Activated T-helper 1 cell treated with anti-CD3 and anti-CD28 coated beads, Interleukin-12 subunit alpha, Interleukin-12 subunit beta, Interleukin-2, Interleukin-4 antibody, amounts not matched to agents 30 ng/mL and 10 ng/mL and 1 ng/mL, durations not matched to agents 14 hours and 24 hours and 36 hours (primary cell): ENCODE measurements at regions of chr1 and their contacts with region 1.

Region 1: DNA sequence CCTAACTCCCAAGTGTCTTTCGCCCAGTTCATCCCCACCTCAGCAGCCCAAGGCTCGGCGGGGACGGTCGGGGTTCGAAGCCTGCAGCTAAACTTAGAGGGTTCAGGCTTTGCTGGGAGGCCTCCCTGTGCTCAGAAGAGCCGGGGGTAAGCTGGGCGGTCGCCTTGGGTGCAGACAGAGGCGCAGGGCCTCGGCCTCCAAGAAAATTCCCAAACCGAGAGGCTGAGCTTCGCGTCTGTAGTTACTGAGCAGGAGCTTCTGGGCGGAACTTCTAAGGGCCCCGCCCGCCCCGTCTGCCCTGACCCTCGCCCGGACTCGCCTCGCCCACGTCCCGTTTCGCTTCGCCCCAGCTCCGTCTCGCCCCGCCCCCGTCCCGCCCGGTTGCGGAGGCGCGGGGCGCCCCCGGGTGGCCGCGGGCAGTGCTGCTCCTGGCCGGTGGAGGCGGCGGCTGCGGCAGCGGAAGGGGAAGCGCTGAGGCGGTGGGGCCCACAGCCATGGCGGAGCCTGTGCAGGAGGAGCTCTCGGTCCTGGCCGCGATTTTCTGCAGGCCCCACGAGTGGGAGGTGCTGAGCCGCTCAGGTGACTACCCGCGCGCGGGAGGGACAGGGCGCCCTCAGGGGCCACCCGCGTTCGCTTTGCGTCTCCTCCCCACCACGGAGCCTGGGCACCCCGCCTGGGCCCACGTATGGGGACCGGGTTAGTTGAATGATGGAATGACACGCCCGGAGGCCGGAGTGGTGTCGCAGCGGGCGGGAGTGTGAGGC is at the start of gene RWDD3:
- DNase-seq: peak; percentile 92
- H3K4me3 Mint-ChIP-seq: peak within 1 kb of the TSS; percentile 94
- H3K27ac Mint-ChIP-seq: peak within 1 kb of the TSS; percentile 93
- H3K4me1 Mint-ChIP-seq: peaks cover 29% of the 10 kb centered on the region
- H3K27me3 Mint-ChIP-seq: peaks cover 19% of the 10 kb centered on the region
- total RNA-seq, gene RWDD3: 10.6 and 10.8 TPM in 2 replicates

Region 2: DNA sequence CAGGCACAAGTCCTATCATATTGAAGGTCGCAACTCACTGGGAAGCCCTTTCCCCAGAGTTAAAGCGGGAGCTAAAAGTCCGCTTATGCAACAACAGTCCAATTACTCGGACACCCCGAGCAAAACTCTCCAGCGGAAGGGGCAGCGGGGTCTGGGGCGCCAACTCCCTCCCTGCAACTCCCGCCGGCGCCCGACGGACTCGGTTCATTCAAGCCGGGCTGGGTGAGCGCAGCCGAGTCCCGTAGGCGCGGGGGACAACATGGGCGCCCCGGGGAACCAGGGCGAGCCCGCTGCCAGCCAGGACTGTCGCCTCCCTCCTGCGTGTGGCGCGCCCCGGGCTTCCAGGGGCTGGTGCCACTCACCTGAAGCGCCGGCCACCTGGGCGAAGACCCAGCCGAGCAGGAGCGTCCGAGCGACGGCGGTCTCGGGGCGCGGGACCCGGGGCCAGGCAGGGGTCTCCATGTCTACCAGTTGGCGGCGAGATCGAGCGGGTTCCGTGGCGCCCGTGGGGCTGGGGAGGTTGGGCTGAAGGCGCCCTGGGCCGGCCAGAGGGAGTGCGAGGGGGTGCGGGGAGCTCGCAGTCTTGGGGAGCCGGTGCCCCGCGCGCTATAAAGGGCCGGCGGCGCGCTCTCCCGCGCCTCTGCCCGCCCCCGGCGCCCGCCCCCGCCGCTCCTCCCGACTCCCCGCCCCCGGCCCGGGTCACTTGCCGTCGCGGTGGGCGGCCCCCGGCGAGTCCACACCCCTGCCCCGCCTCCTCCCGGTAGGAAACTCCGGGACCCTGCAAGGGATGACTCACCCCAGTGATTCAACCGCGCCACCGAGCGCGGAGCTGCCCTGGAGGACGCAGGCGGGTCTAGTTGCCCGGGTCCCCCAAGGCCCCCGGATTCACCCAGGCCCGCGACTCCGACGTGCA is 692.5 kb before region 1 on chr1 and contains the start of gene F3:
- intact Hi-C with region 1: loop called (anchors 10 kb)
- DNase-seq: peak; percentile 68
- H3K4me3 Mint-ChIP-seq: peak within 1 kb of the TSS; percentile 86
- H3K27ac Mint-ChIP-seq: peak within 1 kb of the TSS; percentile 33
- H3K4me1 Mint-ChIP-seq: peaks cover 20% of the 10 kb centered on the region
- H3K27me3 Mint-ChIP-seq: peaks cover 79% of the 10 kb centered on the region
- total RNA-seq, gene F3: 0.16 and 0.32 TPM in 2 replicates

Region 3: GRCh38 chr1:94854458-94855306 is 379.2 kb before region 1 on chr1:
- intact Hi-C with region 1: loop called (anchors 1 kb)
- DNase-seq: peak; percentile 73
- H3K4me3 Mint-ChIP-seq: no peak overlapping the region
- H3K27ac Mint-ChIP-seq: no peak overlapping the region
- H3K4me1 Mint-ChIP-seq: no peaks in the 10 kb centered on the region
- H3K27me3 Mint-ChIP-seq: peaks cover 2% of the 10 kb centered on the region

Region 4: DNA sequence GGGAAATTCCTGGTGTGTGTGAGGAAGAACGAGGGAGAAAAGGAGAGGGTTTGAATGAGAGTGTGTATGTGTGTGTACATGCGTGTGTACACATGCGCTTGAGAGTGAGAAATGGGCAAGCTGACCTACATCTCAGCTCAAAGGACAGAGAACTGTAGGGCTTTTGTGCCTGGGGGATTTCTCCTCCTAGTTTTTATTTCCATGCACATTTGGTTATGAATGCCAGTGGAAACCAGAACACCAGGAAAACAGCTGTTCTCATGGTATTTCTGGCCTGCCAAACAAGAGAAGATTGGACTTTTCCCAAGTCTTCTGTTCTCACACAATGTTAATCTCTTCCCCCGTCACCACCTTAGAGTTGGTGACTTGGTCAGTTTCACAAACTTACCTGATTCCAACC is 368.6 kb before region 1 on chr1:
- intact Hi-C with region 1: loop called (anchors 5 kb)
- DNase-seq: no peak
- H3K4me3 Mint-ChIP-seq: no peak overlapping the region
- H3K27ac Mint-ChIP-seq: no peak overlapping the region
- H3K4me1 Mint-ChIP-seq: no peaks in the 10 kb centered on the region
- H3K27me3 Mint-ChIP-seq: peaks cover 13% of the 10 kb centered on the region

Region 5: GRCh38 chr1:95116580-95117206 is 117.2 kb before region 1 on chr1:
- intact Hi-C with region 1: loop called (anchors 5 kb)
- DNase-seq: no peak
- H3K4me3 Mint-ChIP-seq: peak overlapping the region; percentile 84
- H3K27ac Mint-ChIP-seq: no peak overlapping the region
- H3K4me1 Mint-ChIP-seq: peaks cover 5% of the 10 kb centered on the region
- H3K27me3 Mint-ChIP-seq: peaks cover 53% of the 10 kb centered on the region

Region 6: DNA sequence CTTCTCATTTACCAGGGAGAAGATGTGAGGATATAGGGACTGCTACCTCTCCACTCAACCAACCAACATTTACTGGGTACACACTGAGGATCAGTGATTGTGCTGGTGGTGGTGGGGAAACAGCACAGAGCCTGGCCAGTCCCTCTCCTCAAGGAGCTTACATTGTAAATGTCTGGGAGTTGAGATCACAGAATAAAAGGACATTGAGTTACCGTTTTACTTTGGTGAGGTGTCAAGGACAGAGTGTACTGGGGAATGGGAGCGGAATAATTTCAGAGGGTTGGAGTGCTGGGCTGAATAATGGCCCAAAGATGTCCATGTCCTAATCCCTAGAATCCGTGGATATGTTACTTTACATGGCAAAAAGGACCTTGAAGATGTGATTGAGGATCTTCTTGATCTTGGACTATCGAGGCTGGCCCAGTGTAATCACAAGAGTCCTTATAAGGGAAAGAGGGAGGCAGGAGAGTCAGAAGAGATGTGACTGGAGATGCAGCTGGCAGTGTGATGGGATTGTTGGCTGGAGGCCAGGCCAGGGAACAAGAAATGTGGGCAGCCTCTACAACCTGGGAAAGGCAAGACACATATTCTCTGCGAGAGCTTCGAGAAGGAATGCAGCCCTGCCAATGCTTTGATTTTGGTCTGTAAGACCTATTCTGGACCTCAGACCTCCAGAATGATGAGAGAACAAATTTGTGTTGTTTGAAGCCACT is 26.5 kb before region 1 on chr1:
- intact Hi-C with region 1: no loop called
- DNase-seq: no peak
- H3K4me3 Mint-ChIP-seq: no peak overlapping the region
- H3K27ac Mint-ChIP-seq: no peak overlapping the region
- H3K4me1 Mint-ChIP-seq: no peaks in the 10 kb centered on the region
- H3K27me3 Mint-ChIP-seq: peaks cover 8% of the 10 kb centered on the region

Region 7: DNA sequence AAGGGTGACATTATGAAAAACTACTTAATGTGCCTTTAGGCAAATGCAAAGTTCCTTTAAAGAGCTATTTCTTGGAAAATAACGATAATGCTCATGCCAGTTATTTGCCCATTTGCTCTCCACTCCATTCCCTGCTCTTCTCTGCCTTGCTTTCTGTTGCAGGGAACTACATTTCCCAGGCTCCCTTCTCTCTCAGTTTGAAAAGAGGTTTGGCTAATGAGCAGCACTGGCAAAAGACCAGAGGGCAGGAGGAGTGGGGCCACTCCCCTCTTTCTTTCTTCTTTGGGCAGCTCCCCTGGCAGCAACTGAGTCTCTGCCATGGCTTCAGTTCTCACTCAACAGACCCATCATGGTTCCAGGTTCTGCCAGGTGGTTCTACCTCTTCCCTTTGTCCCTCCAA is 130.6 kb after region 1 on chr1:
- intact Hi-C with region 1: no loop called
- DNase-seq: no peak
- H3K4me3 Mint-ChIP-seq: no peak overlapping the region
- H3K27ac Mint-ChIP-seq: no peak overlapping the region
- H3K4me1 Mint-ChIP-seq: no peaks in the 10 kb centered on the region
- H3K27me3 Mint-ChIP-seq: no peaks in the 10 kb centered on the region

Region 8: GRCh38 chr1:96721416-96722160 is 1487.7 kb after region 1 on chr1 and contains the start of gene PTBP2:
- intact Hi-C with region 1: loop called (anchors 5 kb)
- DNase-seq: peak; percentile 79
- H3K4me3 Mint-ChIP-seq: peak within 1 kb of the TSS; percentile 95
- H3K27ac Mint-ChIP-seq: peak within 1 kb of the TSS; percentile 94
- H3K4me1 Mint-ChIP-seq: peaks cover 22% of the 10 kb centered on the region
- H3K27me3 Mint-ChIP-seq: peaks cover 15% of the 10 kb centered on the region
- total RNA-seq, gene PTBP2: 17.7 and 19.7 TPM in 2 replicates